Dorsolateral prefrontal cortex (tissue), 120 donors: ENCODE measurements at regions of chr5 and their contacts with region 1.

Region 1: GRCh38 chr5:120803282-120803681 is 339.2 kb downstream of the PRR16 start:
- DNase-seq: no peak
- H3K4me3 ChIP-seq: peak overlapping the region in 3 of 59 donors; percentile 3 to 24 (median 23)
- H3K27ac ChIP-seq: no peak overlapping the region
- H3K27me3 ChIP-seq: no peaks in the 10 kb centered on the region
- CTCF ChIP-seq: peak; percentile 28 to 70 (median 48)

Region 2: GRCh38 chr5:120463991-120464626 is 339.2 kb before region 1 on chr5 and contains the start of gene PRR16:
- intact Hi-C with region 1: loop called in 1 of 2 experiments (anchors 10 kb)
- DNase-seq: peak in 9 of 10 donors; percentile 14 to 79 (median 51)
- H3K4me3 ChIP-seq: peak within 1 kb of the TSS; percentile 53 to 84 (median 69)
- H3K27ac ChIP-seq: peak within 1 kb of the TSS in 46 of 59 donors; percentile 11 to 86 (median 64)
- H3K27me3 ChIP-seq: peaks cover 0 to 4% (median 0%) of the 10 kb centered on the region in 45 donors
- CTCF ChIP-seq: peak in 30 of 56 donors; percentile 2 to 45 (median 32)
- total RNA-seq, gene PRR16: 2.2 to 15.7 (median 7.5) TPM

Region 3: DNA sequence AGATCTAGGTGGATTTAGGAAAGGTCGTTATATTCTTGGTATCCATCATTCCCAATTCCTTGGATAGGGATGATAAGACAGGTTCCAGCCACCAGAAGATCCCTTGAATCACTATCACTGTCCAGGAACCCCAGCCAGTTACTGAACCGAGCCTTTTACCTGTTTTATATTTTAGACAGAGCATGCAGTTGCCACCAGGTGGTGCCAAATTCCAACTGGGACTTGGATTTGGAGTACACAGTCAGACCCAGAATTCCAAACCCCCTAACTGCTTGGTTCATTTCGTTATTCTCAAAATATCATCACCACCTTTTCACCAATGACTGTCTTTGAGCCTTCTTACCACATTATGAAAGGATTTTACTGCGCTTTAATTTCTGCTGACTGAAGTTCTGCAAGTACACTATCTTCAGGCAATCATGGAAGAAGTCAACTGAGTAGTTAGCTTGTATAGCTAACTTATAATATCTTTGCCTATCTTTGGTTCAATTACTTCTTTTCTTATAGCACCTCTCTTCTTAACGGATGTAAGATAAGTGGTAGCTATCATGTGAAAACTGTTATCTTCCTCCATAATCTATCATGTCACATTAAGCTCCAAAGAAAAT is 147.3 kb before region 1 on chr5:
- intact Hi-C with region 1: loop called in 1 of 2 experiments (anchors 5 kb)
- DNase-seq: peak in 2 of 10 donors; percentile 33 to 38
- H3K4me3 ChIP-seq: no peak overlapping the region
- H3K27ac ChIP-seq: no peak overlapping the region
- H3K27me3 ChIP-seq: no peaks in the 10 kb centered on the region
- CTCF ChIP-seq: peak in 51 of 56 donors; percentile 16 to 64 (median 50)